ENCODE measurements at regions of chr9 and their contacts with region 1.

Region 1: GRCh38 chr9:131889437-131890251 is 149.8 kb upstream of the RAPGEF1 start:
- DNase-seq: no peak
- H3K4me3 ChIP-seq: no peak overlapping the region
- CTCF ChIP-seq: no peak

Region 2: GRCh38 chr9:131826968-131827525 is 62.6 kb before region 1 on chr9:
- in situ Hi-C with region 1: loop called (anchors 10 kb)
- DNase-seq: no peak
- H3K4me3 ChIP-seq: no peak overlapping the region
- CTCF ChIP-seq: no peak

Measured in astrocyte of the cerebellum (primary cell).